ENCODE measurements at regions of chr18 and their contacts with region 1.

Region 1: DNA sequence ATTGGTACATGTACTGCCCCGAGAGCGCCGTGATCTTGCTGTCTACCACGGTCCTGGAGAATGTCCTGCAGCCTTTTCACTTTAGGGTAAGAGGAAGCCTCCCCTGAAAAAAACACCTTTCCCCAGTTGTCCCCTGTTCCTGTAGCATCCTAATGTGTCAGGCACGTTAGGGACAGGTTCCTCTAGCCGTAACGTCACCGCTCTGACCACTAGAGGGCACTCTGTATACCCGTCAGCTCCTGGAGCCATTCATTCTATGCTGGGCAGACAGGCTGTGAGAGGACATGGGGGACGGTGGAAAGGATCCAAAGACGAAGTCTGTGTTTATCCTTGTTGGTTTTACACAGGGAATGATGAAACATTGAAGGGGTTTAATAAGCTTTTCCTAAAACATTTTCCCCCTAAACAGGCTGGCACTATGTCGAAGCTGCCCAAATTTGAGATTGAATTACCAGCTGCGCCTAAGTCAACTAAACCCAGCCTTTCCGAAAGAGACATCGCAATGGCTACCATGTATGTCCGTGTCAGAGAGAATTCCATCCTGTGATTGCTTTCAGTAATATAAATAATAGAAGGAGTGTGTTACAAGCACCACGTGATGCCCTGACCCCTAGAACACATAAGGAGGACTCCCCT is 12.7 kb downstream of the RMC1 start:
- DNase-seq: peak; percentile 61
- H3K4me3 Mint-ChIP-seq: no peak overlapping the region
- H3K27ac Mint-ChIP-seq: peak overlapping the region; percentile 3
- H3K4me1 Mint-ChIP-seq: peaks cover 35% of the 10 kb centered on the region
- H3K27me3 Mint-ChIP-seq: no peaks in the 10 kb centered on the region

Region 2: DNA sequence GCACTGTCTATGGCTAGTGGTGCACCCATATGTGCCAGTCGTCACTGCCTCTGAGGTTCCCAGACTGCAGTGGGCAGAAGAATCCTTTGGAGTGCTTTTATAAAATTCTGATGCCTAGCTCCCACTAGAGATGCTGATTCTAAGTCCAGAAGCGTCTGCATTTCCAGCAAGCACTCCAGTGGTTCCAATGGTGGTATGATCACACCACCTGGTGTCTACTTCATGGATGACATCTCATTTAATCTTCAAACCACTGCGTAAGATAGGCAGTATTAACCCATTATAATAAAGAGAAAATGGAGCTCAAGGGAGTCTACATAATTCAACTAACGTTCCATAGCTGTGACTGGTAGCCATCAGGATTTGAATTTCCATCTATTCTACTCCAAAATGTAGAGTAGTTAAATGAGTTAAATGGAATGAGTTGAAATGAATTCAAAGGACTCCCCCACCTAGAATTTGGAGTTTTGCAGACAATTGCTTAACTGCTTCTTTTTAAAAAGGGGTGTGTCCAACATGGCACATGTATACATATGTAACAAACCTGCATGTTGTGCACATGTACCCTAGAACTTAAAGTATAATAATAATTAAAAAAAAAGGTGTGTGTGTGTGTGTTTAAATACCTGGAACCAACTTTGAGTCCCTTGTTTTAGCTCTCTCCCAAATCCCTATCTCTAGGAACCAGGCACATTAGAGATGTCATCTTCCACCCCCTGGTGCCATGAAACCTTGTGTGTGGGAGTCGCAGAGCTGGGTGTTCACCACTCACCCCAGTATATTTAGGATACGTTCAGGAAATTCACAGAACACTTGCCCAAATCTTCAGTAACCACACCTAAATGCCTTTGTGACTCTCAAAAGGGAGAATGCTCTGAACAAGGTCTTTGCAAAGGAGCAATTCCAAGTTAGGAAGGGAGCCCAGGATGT is 187.3 kb after region 1 on chr18:
- intact Hi-C with region 1: loop called (anchors 1 kb)
- DNase-seq: no peak
- H3K4me3 Mint-ChIP-seq: no peak overlapping the region
- H3K27ac Mint-ChIP-seq: no peak overlapping the region
- H3K4me1 Mint-ChIP-seq: no peaks in the 10 kb centered on the region
- H3K27me3 Mint-ChIP-seq: peaks cover 31% of the 10 kb centered on the region

Region 3: GRCh38 chr18:23812546-23813440 is 296.8 kb after region 1 on chr18:
- intact Hi-C with region 1: loop called (anchors 1 kb)
- DNase-seq: no peak
- H3K4me3 Mint-ChIP-seq: no peak overlapping the region
- H3K27ac Mint-ChIP-seq: no peak overlapping the region
- H3K4me1 Mint-ChIP-seq: peaks cover 23% of the 10 kb centered on the region
- H3K27me3 Mint-ChIP-seq: peaks cover 23% of the 10 kb centered on the region

Region 4: GRCh38 chr18:24683965-24684364 is 1167.9 kb after region 1 on chr18:
- intact Hi-C with region 1: no loop called
- DNase-seq: no peak
- H3K4me3 Mint-ChIP-seq: no peak overlapping the region
- H3K27ac Mint-ChIP-seq: no peak overlapping the region
- H3K4me1 Mint-ChIP-seq: no peaks in the 10 kb centered on the region
- H3K27me3 Mint-ChIP-seq: peaks cover 3% of the 10 kb centered on the region